ENCODE measurements at regions of chr2 and their contacts with region 1.

Region 1: DNA sequence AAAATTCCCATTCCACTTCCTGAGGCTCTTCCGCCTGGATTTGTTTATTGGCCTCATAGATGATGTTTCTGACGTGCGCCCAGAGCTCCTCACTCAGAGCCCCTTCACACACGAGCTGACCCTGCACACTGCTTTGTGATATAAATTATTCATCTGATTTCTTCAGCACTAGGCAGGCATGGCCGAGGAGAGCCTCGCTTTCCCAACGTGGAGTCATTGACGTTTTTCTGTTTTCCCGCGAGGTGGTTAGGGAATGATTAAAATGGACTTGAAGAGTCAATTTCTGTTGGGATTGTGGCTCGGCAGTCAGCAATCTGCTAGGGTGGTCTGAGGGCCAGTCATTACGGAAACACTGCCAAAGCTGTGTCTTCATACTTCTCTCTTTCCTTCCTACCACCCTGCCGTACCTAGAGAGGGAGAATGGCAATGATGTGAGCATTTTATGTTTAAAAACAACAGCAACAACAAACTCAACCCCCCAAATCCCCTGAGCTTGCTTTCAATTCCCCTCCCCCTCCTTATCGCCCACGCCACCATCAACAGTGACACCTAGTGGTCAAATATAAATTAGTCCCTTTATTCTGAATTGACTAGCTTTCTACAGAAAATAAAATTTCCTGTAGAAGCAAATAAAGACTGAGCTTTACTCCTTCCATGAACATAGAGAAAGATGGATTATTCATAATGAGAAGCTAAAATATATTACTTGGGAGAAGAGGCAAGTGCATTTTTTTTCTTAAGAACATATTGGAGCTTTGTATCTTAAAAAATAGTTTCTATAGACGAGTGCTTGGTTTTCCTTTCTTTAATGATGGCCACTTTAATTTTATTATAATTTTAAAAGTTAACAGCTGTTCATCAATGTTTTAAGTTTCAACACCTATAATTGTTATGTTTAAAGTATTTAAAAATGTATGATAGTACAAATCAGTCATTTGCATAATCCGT is 285.1 kb downstream of the MTX2 start:
- DNase-seq: no peak
- H3K4me3 ChIP-seq: peak overlapping the region; percentile 17; the same call in 1 of the 2 replicates
- H3K27me3 ChIP-seq: peaks cover 5% of the 10 kb centered on the region
- CTCF ChIP-seq: peak; percentile 71

Region 2: GRCh38 chr2:176056406-176056805 is 498.0 kb before region 1 on chr2:
- CTCF ChIA-PET with region 1: no interaction called
- POLR2A ChIA-PET with region 1: no interaction called
- DNase-seq: no peak
- H3K4me3 ChIP-seq: no peak overlapping the region
- H3K27me3 ChIP-seq: no peaks in the 10 kb centered on the region
- CTCF ChIP-seq: no peak

Region 3: GRCh38 chr2:176126929-176127773 is 427.2 kb before region 1 on chr2:
- CTCF ChIA-PET with region 1: interaction called, 24 read pairs
- POLR2A ChIA-PET with region 1: no interaction called
- DNase-seq: no peak
- H3K4me3 ChIP-seq: no peak overlapping the region
- H3K27me3 ChIP-seq: peaks cover 25% of the 10 kb centered on the region
- CTCF ChIP-seq: peak; percentile 69

Region 4: GRCh38 chr2:176454893-176455811 is 99.2 kb before region 1 on chr2:
- CTCF ChIA-PET with region 1: interaction called, 22 read pairs
- POLR2A ChIA-PET with region 1: no interaction called
- DNase-seq: no peak
- H3K4me3 ChIP-seq: no peak overlapping the region
- H3K27me3 ChIP-seq: no peaks in the 10 kb centered on the region
- CTCF ChIP-seq: peak; percentile 89

Region 5: DNA sequence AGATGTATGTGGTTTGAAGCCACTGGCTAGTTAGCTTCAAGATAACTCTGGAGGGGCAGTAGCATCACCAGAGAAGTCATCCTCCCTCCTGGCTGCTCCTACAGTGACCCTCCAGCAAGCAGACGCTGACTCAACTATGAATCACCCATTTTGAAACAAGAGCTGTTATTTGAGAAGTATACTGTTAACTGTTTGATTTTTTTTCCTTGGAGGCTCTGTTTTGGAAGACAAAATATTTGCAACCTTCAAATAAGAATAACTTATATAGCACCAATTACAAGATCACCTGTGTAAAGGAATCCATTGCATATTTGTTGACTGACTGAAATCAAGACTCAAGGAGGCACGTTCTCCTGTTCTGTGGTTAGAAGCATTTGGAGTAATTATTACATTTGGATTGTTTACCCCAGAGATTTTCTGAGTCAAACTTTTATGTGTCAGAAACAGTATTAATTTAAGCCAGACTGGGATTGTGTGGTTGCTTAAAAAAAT is 28.7 kb after region 1 on chr2:
- CTCF ChIA-PET with region 1: interaction called, 10 read pairs
- POLR2A ChIA-PET with region 1: no interaction called
- DNase-seq: peak; percentile 73
- H3K4me3 ChIP-seq: no peak overlapping the region
- H3K27me3 ChIP-seq: no peaks in the 10 kb centered on the region; the same call in 1 of the 2 replicates
- CTCF ChIP-seq: no peak

Region 6: GRCh38 chr2:176653479-176654443 is 99.4 kb after region 1 on chr2:
- CTCF ChIA-PET with region 1: interaction called, 10 read pairs
- POLR2A ChIA-PET with region 1: no interaction called
- DNase-seq: no peak
- H3K4me3 ChIP-seq: no peak overlapping the region
- H3K27me3 ChIP-seq: no peaks in the 10 kb centered on the region; the same call in 1 of the 2 replicates
- CTCF ChIP-seq: peak; percentile 79

Measured in BJ (cell line).